ENCODE measurements at regions of chr17 and their contacts with region 1.

Region 1: DNA sequence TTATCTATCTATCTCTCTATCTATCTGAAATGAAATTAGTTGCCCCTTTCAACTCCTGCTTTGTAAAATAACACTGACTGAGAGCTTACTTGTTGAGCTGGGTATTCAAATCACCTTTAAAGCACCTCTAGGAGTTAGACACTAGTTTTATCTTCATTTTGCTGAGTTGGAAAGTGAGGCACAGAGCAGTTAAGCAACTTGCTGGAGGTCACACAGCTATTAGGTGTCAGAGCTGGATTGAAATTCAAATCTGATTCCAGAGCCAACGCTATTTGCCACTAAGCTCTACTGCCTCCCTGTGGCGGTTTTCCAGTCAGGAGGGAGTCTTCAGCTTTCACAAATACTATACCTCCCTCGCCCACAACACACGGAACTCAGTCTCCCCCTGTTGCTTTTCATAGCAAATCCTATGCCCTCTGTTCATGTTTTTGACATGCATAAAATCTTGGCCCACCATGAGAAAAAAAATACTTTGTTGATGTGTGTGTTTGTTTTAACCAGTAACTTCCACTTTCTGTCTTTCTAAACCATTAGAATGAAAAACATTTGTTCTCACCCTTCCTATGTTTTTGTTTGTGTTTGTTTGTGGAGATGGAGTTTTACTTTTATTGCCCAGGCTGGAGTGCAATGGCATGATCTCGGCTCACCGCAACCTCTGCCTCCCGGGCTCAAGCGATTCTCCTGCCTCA is 74.8 kb upstream of the SMURF2 start:
- DNase-seq: no peak

Region 2: GRCh38 chr17:64506576-64507477 is 230.1 kb before region 1 on chr17 and contains the start of gene CEP95:
- intact Hi-C with region 1: no loop called
- DNase-seq: peak; percentile 96
- total RNA-seq, gene CEP95: 16.4 TPM

Region 3: GRCh38 chr17:64632606-64633005 is 104.3 kb before region 1 on chr17:
- intact Hi-C with region 1: no loop called
- DNase-seq: no peak

Region 4: DNA sequence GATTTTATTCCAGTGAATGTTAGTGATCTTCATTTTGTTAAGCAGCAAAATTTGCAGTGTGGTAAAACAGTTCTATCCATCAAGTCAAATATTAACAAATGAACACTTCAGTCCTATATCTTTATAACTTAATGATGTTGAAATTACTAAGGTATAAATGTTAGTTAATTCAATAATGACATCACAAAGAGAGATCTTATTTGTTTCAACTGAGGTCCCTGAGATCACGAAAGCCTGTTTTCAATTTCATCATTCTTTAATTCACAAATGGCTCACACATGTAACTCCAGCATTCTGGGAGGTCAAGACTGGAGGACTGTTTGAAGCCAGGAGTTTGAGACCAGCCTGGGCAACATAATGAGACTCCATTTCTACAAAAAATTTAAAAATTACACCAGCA is 88.7 kb before region 1 on chr17:
- intact Hi-C with region 1: loop called (anchors 10 kb)
- DNase-seq: no peak